Natural killer cell (primary cell): ENCODE measurements at regions of chr5 and their contacts with region 1.

Region 1: DNA sequence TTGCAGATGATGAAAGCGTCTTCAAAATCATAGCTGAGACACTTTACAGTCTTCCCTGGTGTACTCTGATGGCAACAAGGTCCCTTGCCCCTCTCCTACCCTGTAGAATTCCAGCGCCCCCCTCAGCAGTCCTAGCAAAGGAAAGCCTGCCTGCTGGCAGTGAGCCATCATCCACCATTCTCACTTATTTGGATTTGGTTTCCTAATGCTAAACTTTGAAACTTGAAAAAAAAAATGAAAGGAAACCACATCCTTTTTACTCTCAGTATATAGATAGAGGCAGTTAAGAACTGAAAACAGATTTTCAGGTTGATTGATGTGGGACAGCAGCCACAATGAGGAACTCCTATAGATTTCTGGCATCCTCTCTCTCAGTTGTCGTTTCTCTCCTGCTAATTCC is at the start of gene GZMA:
- DNase-seq: peak; percentile 33 to 79
- ATAC-seq: peak; percentile 37 to 56 (median 54)
- H3K4me3 ChIP-seq: peak within 1 kb of the TSS; percentile 71
- H3K4me3 Mint-ChIP-seq: peak within 1 kb of the TSS; percentile 94
- H3K27ac ChIP-seq: peak within 1 kb of the TSS; percentile 87
- H3K27ac Mint-ChIP-seq: peak within 1 kb of the TSS; percentile 92 to 96
- H3K4me1 ChIP-seq: peaks cover 15% of the 10 kb centered on the region
- H3K4me1 Mint-ChIP-seq: peaks cover 79 to 85% of the 10 kb centered on the region in 2 donors
- H3K27me3 ChIP-seq: no peaks in the 10 kb centered on the region
- H3K27me3 Mint-ChIP-seq: no peaks in the 10 kb centered on the region
- CTCF ChIP-seq: no peak
- total RNA-seq, gene GZMA: 530 to 621 (median 590) TPM

Region 2: GRCh38 chr5:54990841-54991258 is 111.5 kb before region 1 on chr5:
- intact Hi-C with region 1: loop called (anchors 5 kb)
- DNase-seq: no peak
- ATAC-seq: no peak
- H3K4me3 ChIP-seq: no peak overlapping the region
- H3K4me3 Mint-ChIP-seq: no peak overlapping the region
- H3K27ac ChIP-seq: no peak overlapping the region
- H3K27ac Mint-ChIP-seq: peak overlapping the region in 1 of 2 donors; percentile 9
- H3K4me1 ChIP-seq: peaks cover 37% of the 10 kb centered on the region
- H3K4me1 Mint-ChIP-seq: peaks cover 76 to 78% of the 10 kb centered on the region in 2 donors
- H3K27me3 ChIP-seq: no peaks in the 10 kb centered on the region
- H3K27me3 Mint-ChIP-seq: no peaks in the 10 kb centered on the region
- CTCF ChIP-seq: no peak

Region 3: GRCh38 chr5:55021410-55021809 is 80.9 kb before region 1 on chr5:
- intact Hi-C with region 1: loop called (anchors 5 kb)
- DNase-seq: peak in 1 of 2 donors; percentile 49
- ATAC-seq: peak; percentile 19 to 46 (median 38)
- H3K4me3 ChIP-seq: no peak overlapping the region
- H3K4me3 Mint-ChIP-seq: peak overlapping the region; percentile 53
- H3K27ac ChIP-seq: no peak overlapping the region
- H3K27ac Mint-ChIP-seq: peak overlapping the region; percentile 77 to 83
- H3K4me1 ChIP-seq: peaks cover 22% of the 10 kb centered on the region
- H3K4me1 Mint-ChIP-seq: peaks cover 53 to 54% of the 10 kb centered on the region in 2 donors
- H3K27me3 ChIP-seq: no peaks in the 10 kb centered on the region
- H3K27me3 Mint-ChIP-seq: no peaks in the 10 kb centered on the region
- CTCF ChIP-seq: no peak

Region 4: DNA sequence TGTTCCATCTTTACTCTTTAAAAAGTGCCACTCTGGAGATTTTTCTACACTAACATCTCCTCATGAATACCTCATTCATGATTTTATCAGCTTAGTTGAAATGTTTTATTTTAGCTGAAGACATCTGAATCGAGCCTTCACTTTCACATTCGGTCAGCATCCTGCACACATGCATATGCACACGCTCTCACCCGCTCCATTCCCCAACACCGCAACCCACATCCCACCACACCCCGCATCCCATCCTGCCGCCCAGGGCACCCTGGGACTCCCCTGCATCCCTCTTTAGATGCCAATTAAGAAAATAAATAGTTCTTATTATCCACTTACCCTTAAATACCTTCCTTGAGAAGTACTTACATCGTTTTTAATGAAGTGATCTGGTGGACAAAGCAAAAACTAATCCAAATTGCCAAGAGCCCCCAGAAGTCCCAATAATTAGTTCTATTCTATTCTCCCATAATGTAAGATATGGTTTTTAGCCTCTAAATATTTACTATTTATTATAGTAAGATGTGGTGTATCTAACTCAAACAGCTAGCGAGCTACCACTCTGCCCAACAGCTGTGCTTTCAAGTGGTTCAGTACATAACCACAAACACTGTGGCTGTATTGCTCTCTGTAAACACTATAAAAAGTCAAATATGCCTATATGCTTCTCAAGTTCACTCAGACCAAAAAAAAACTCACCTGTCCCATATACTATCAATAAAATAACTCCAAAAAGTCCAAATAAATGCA is 40.1 kb before region 1 on chr5:
- intact Hi-C with region 1: loop called (anchors 1 kb)
- DNase-seq: peak; percentile 63 to 69
- ATAC-seq: peak; percentile 77 to 87 (median 85)
- H3K4me3 ChIP-seq: peak overlapping the region; percentile 38
- H3K4me3 Mint-ChIP-seq: peak overlapping the region; percentile 90
- H3K27ac ChIP-seq: peak overlapping the region; percentile 83
- H3K27ac Mint-ChIP-seq: peak overlapping the region; percentile 95 to 96
- H3K4me1 ChIP-seq: peaks cover 26% of the 10 kb centered on the region
- H3K4me1 Mint-ChIP-seq: peaks cover 72 to 86% of the 10 kb centered on the region in 2 donors
- H3K27me3 ChIP-seq: no peaks in the 10 kb centered on the region
- H3K27me3 Mint-ChIP-seq: no peaks in the 10 kb centered on the region
- CTCF ChIP-seq: no peak

Region 5: GRCh38 chr5:55072666-55073065 is 29.7 kb before region 1 on chr5:
- intact Hi-C with region 1: loop called (anchors 1 kb)
- DNase-seq: peak in 1 of 2 donors; percentile 65
- ATAC-seq: peak; percentile 81 to 92 (median 90)
- H3K4me3 ChIP-seq: no peak overlapping the region
- H3K4me3 Mint-ChIP-seq: peak overlapping the region; percentile 83
- H3K27ac ChIP-seq: peak overlapping the region; percentile 72
- H3K27ac Mint-ChIP-seq: peak overlapping the region; percentile 79 to 98
- H3K4me1 ChIP-seq: peaks cover 31% of the 10 kb centered on the region
- H3K4me1 Mint-ChIP-seq: peaks cover 47 to 48% of the 10 kb centered on the region in 2 donors
- H3K27me3 ChIP-seq: no peaks in the 10 kb centered on the region
- H3K27me3 Mint-ChIP-seq: no peaks in the 10 kb centered on the region
- CTCF ChIP-seq: no peak

Region 6: DNA sequence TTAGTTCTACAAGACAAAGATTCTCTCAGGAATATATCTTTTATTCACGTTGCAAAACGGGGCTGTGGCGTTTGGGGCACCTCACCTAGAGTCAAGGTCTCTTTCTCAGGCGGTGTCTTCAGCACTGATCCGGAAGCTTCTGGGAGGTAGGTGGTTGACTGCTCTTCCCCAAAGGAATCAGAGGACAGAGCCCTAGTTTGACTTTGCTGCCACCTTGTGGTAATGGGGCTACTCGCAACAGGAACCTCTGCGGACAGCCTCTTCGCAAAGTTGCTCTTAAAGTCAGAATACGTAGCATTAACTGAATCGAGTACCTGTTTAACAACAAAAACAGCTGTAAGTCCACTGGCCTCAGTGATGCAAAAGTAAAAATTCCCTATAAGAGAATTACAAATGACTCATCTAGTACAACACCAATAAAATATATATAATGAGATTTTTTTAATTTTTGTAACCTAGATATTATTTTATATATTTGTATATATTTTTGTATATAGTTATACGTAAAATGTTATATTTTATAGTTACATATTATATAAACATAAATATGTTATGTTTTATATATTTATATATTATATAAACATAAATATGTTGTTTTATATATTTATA is 44.3 kb after region 1 on chr5:
- intact Hi-C with region 1: loop called (anchors 5 kb)
- DNase-seq: peak; percentile 67 to 92
- ATAC-seq: peak; percentile 86 to 99 (median 98)
- H3K4me3 ChIP-seq: no peak overlapping the region
- H3K4me3 Mint-ChIP-seq: peak overlapping the region; percentile 35
- H3K27ac ChIP-seq: no peak overlapping the region
- H3K27ac Mint-ChIP-seq: no peak overlapping the region
- H3K4me1 ChIP-seq: peaks cover 7% of the 10 kb centered on the region
- H3K4me1 Mint-ChIP-seq: peaks cover 14 to 15% of the 10 kb centered on the region in 2 donors
- H3K27me3 ChIP-seq: no peaks in the 10 kb centered on the region
- H3K27me3 Mint-ChIP-seq: peaks cover 0 to 4% of the 10 kb centered on the region in 2 donors
- CTCF ChIP-seq: peak; percentile 97